ENCODE measurements at regions of chr3 and their contacts with region 1.

Region 1: DNA sequence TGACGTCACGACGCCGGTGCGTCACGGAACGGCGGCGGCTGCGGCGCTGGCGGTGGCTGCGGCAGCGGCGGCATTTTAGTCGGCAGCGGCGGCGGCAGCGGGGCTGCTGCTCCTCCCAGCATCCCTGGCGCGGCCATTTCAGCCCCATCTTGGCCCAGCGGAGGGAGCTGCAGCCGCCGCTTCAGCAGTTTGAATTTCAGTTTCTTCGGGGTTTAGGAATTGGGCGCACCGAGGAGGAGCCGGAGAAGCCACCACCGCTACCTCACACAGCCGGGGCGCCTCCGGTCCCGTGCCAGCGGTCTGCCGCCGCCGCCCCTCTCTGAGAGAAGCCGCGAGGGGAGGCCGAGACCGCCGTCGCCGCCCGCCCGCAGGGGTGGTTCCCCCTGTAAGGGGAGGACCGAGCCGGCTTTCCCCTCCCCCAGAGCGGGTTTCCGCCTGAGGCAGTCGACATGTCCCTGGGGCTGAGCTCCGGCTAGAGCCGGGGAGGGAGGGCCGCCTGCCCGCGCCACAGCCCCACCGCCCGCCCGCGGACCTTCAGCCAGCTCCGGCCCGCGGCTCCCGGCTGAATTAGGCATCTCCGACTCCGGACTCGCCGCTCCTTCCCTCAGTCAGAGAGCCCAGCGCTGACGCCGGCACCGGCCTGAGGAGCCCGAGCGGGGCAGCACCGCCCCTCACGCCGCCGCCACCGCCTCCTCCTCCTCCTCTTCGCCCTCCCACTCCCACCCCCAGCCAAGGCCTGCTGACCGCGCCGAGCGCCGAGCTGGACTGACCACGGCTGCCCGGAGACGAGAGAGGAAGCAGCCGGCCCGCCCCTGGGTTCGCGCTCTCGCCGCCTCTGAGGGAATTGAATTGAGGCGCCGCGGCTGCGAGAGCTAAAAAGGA is at the start of gene TSC22D2:
- DNase-seq: peak; percentile 96
- H3K4me3 Mint-ChIP-seq: peak within 1 kb of the TSS; percentile 77
- H3K27ac Mint-ChIP-seq: peak within 1 kb of the TSS; percentile 99
- H3K4me1 Mint-ChIP-seq: peaks cover 23% of the 10 kb centered on the region
- H3K27me3 Mint-ChIP-seq: no peaks in the 10 kb centered on the region
- total RNA-seq, gene TSC22D2: 13.0 to 13.7 TPM

Region 2: DNA sequence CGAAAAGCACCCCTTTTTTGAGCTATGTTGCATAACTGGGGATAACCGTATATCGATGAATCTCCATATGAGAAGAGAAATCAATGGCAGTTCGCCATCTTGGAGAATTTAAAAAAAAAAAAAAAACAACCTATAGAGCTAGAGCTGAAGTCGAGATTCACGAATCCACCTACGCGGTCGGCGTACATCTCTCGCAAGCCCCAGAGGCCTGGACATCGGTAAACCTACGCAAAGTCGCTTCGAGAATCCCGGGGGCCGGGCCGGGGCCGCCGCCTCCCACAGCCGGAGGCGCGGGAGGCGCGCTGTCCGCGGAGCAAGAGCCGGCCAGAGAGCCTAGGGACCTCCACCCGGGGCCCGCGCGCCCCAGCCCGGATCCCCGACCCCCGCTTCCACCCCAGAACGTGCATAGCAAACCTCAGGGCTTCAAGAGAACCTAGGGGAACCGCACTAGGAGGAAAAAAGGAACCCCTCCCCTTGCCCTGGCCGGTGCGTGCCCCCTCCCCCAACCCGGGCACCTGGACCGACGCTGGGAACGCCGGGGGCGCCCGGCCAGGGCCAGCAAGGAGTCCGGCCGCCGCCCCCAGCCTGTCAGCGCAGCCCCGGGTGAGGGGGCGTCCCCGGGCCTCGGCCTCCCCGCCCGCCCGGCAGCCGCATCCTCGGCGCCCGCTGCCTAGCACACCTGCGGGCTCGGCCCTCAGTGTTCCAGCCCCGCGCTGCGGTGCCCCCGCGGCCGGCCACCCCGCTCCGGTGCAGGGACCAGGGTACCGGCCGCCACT is 438.3 kb before region 1 on chr3:
- CTCF ChIA-PET with region 1: no interaction called
- intact Hi-C with region 1: loop called (anchors 2 kb)
- DNase-seq: peak; percentile 79
- H3K4me3 Mint-ChIP-seq: peak overlapping the region; percentile 87
- H3K27ac Mint-ChIP-seq: peak overlapping the region; percentile 30
- H3K4me1 Mint-ChIP-seq: peaks cover 11% of the 10 kb centered on the region
- H3K27me3 Mint-ChIP-seq: peaks cover 20% of the 10 kb centered on the region

Region 3: DNA sequence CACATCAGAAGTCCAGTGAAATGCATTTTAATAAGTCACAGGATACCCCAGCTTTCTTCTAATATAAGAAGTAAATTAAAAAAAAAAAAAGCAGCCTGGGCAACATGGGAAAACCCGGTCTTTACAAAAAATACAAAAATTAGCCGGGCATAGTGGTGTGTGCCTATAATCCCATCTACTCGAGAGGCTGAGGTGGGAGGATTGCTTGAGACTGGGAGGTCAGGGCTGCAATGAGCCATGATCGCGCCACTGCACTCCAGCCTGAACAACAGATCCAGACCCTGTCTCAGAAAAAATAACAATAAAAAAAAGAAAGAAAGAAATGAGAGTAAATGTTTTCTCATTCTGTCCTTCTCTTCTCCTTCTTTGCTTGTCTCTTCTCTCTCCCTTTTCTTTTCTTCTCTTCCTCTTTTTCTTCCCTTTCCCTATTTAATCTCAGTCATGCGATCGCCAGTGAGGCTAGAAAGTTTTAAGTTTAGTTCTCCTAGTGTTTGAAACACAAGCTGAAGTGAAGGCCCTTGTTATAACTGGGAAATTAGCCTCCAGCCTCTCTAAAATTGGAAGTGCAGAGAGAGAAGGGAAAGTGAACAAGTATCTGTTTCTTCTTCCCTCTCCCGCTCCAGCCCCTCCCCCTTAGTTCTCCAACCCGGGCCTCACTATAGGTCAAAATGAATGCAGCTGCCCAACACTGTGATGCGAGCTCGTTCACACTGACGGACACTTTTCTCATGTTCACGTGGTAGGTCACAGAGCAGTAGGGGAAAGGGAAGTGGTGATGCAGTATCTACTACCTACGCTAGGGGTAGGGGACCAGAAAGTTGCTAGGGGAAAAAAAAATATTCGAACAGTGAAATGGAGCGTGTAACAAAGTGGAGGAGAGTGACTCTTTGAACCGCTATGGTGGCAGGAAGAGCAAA is 23.9 kb before region 1 on chr3:
- CTCF ChIA-PET with region 1: interaction called, 16 read pairs
- intact Hi-C with region 1: loop called (anchors 1 kb)
- DNase-seq: peak; percentile 71
- H3K4me3 Mint-ChIP-seq: peak overlapping the region; percentile 56
- H3K27ac Mint-ChIP-seq: peak overlapping the region; percentile 66
- H3K4me1 Mint-ChIP-seq: peaks cover 20% of the 10 kb centered on the region
- H3K27me3 Mint-ChIP-seq: no peaks in the 10 kb centered on the region

Region 4: DNA sequence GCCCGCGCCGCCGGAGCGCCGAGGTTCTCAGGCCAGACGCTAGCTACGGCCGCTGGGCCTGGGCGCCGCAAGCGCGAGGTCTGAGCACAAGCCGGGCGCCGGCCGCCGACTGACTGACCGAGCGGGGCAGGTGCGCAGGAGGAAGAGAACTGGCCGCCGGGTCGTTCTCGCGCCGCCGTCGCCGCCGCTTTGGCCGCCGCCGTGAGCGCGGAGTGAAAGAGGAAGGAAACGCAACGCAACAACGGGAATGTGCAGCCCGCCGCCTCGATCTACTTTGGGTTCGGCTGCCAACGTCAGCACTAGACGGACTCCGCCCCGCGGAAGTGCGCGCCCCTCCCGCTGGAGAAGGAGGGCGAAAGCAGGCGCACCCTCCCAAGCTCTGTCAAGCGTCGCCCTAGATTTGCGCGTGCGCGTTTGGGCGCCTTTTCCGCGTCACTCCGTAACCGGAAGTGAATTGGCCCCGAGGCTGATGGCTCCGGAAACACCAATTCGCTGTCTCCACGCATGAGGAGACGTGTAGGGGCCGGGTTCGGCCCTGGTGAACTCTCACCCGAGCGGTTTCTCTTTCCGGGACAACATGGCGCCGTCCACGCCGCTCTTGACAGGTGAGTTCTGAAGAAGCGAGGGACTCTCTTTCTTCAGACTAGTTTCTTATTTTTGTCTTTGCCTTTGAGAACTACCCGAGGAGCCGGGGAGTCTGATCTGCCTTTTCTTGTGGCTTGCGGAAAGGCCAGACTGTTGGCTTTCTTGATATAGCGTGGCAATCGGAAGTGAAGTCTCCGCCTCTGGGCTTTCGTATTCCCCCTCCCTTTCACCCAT is 138.0 kb after region 1 on chr3 and contains the starts of genes EIF2A and SERP1:
- CTCF ChIA-PET with region 1: interaction called, 4 read pairs
- intact Hi-C with region 1: loop called (anchors 1 kb)
- DNase-seq: peak; percentile 99
- H3K4me3 Mint-ChIP-seq: peak within 1 kb of the TSS; percentile 97
- H3K27ac Mint-ChIP-seq: peak within 1 kb of the TSS; percentile 95
- H3K4me1 Mint-ChIP-seq: peaks cover 69% of the 10 kb centered on the region
- H3K27me3 Mint-ChIP-seq: no peaks in the 10 kb centered on the region
- total RNA-seq, gene EIF2A: 133 to 135 TPM
- total RNA-seq, gene SERP1: 95.9 to 105 TPM

Region 5: DNA sequence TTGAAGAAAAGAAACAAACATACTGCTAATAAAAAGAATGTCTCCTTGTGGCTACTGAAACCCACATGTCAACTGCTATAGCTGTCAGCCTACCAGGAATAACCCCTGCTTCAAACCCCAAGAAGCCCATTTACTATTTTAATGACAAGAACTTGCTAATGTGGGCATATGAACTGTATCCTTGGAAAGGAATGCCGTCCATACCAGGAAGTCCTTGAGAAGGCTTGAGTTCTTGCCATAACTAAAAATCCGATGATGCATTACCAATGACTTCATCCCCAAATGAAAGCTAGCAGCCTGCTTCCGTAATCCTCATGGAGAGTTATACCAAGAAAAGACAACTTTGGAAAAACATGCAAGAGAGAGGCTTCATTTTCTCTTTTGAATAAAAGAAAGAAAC is 461.9 kb after region 1 on chr3:
- CTCF ChIA-PET with region 1: no interaction called
- intact Hi-C with region 1: loop called (anchors 5 kb)
- DNase-seq: no peak
- H3K4me3 Mint-ChIP-seq: no peak overlapping the region
- H3K27ac Mint-ChIP-seq: no peak overlapping the region
- H3K4me1 Mint-ChIP-seq: no peaks in the 10 kb centered on the region
- H3K27me3 Mint-ChIP-seq: peaks cover 6% of the 10 kb centered on the region

Region 6: GRCh38 chr3:152127058-152127457 is 1718.6 kb after region 1 on chr3:
- CTCF ChIA-PET with region 1: no interaction called
- intact Hi-C with region 1: loop called (anchors 5 kb)
- DNase-seq: peak; percentile 53
- H3K4me3 Mint-ChIP-seq: no peak overlapping the region
- H3K27ac Mint-ChIP-seq: no peak overlapping the region
- H3K4me1 Mint-ChIP-seq: peaks cover 29% of the 10 kb centered on the region
- H3K27me3 Mint-ChIP-seq: no peaks in the 10 kb centered on the region

Measured in activated naive CD4-positive, alpha-beta T cell treated with anti-CD3 and anti-CD28 coated beads for 36 hours (primary cell).